PC-9 (cell line): ENCODE measurements at regions of chr3 and their contacts with region 1.

Region 1: DNA sequence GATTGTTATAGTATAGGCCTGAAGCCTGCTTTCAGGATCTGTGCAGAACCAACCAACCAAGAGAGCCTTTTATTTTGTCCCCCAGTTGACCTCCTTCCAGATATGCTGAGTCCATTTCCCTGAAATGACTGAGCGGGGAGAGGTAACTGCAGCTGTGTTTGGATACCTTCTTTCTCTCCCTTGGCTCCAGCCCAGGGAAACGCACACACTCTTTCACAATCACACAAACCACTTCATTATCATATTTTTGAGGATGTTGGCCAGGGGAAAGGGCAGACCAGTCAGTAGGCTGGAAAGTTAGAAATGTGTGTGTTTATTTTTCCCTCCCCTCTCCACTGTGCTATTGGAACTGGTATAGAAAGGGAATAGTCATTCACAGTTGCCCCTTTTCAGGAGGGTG is 417.7 kb upstream of the TBL1XR1 start:
- DNase-seq: peak; percentile 84 to 96
- H3K4me3 ChIP-seq: no peak overlapping the region
- H3K27ac ChIP-seq: peak overlapping the region; percentile 62
- H3K4me1 ChIP-seq: peaks cover 87% of the 10 kb centered on the region
- H3K27me3 ChIP-seq: no peaks in the 10 kb centered on the region
- CTCF ChIP-seq: no peak

Region 2: DNA sequence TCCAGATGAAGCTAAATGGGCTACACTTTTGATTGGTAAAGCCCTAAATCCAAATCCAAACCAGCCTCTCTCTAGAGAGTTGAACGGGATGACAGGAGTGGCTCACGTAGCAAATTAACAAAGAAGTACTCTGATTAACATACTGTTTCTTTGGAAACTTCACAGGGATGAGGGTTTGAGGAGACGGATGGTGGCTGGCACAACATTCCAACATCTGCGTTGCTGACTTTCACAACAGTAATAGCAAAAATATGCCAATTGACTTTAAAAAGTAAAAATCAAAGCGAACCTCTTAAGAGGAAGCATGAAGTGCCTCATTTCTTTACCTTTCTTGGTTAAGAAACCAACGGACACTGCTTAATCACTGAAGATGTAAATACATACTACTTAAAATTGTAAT is 599.1 kb before region 1 on chr3:
- CTCF ChIA-PET with region 1: no interaction called
- POLR2A ChIA-PET with region 1: interaction called, 13 read pairs
- intact Hi-C with region 1: no loop called
- DNase-seq: no peak
- H3K4me3 ChIP-seq: no peak overlapping the region
- H3K27ac ChIP-seq: no peak overlapping the region
- H3K4me1 ChIP-seq: no peaks in the 10 kb centered on the region
- H3K27me3 ChIP-seq: no peaks in the 10 kb centered on the region
- CTCF ChIP-seq: no peak

Region 3: DNA sequence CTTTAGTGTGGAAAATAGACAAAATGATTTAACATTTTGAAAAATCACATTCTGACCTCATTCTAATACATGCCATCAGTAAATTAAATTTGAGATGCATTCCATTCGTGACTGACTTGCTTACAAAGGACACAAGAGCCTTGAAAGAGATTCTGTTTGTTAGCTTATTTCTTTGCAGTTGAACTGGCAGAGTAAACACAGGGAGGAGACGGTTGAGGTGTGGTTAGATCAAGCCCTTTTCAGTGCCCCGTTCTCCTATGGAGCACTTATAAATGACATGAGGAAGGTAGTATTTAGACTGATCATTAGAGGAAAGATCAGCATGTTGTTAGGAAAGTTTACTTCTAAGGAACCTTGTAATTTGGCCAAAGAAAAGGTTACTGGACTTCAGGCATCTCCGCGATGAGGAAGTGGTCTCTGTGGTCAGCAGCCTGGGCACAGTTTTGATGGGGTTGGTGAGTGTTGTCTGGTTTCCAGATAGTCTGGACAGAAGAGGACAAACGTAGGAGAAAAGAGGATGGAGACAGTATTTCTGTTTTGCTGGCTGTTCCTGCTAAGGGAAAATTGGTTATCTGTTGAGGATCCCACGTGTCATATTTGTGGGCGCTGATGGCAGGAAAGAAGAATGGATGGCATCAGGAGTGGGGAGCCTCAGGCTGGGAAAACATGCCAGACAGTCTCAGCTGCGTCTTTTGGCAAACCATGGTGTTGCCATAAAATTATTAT is 88.9 kb before region 1 on chr3:
- CTCF ChIA-PET with region 1: no interaction called
- POLR2A ChIA-PET with region 1: interaction called, 4 read pairs
- intact Hi-C with region 1: loop called (anchors 1 kb)
- DNase-seq: peak; percentile 25 to 87
- H3K4me3 ChIP-seq: no peak overlapping the region
- H3K27ac ChIP-seq: no peak overlapping the region
- H3K4me1 ChIP-seq: peaks cover 79% of the 10 kb centered on the region
- H3K27me3 ChIP-seq: no peaks in the 10 kb centered on the region
- CTCF ChIP-seq: no peak

Region 4: DNA sequence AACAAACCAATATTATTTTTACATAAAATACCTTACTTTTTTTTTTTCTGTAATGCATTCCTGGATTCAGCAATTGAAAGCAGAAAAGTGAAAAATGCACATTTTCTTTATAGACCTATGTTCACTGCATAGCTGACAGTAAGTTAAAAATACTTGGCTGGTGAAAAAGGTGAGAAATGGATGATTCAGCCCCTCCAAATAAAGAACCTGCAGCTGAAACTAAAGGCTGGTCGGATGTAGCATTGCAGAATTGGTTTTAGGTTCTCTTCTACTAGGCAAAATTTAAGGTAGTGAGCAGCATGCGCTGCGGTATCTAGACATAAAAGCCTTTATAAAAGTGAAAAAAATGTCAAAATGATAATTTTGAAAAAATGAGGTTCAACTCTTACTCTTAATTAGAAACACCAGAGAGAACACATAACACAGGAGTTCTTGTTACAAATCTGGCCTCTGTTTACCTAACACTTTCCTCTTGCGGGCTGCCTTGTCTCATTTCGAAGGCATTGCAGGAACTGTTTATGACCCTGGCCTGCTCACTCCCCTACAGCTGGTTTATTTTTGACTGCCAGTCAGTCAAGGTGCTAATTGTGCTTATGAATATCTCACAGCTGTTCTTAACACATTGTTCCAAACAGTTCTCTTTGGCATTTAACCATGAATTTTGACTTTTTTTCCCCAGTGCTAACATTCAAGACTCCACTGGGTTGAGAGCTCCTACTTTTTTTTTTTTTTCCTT is 37.7 kb after region 1 on chr3:
- CTCF ChIA-PET with region 1: no interaction called
- POLR2A ChIA-PET with region 1: interaction called, 14 read pairs
- intact Hi-C with region 1: no loop called
- DNase-seq: no peak
- H3K4me3 ChIP-seq: no peak overlapping the region
- H3K27ac ChIP-seq: no peak overlapping the region
- H3K4me1 ChIP-seq: no peaks in the 10 kb centered on the region
- H3K27me3 ChIP-seq: no peaks in the 10 kb centered on the region
- CTCF ChIP-seq: no peak

Region 5: GRCh38 chr3:177810162-177810623 is 195.2 kb after region 1 on chr3:
- CTCF ChIA-PET with region 1: no interaction called
- POLR2A ChIA-PET with region 1: no interaction called
- intact Hi-C with region 1: loop called (anchors 1 kb)
- DNase-seq: peak in 1 of 2 experiments; percentile 99
- H3K4me3 ChIP-seq: no peak overlapping the region
- H3K27ac ChIP-seq: peak overlapping the region; percentile 82
- H3K4me1 ChIP-seq: peaks cover 34% of the 10 kb centered on the region
- H3K27me3 ChIP-seq: no peaks in the 10 kb centered on the region
- CTCF ChIP-seq: no peak

Region 6: DNA sequence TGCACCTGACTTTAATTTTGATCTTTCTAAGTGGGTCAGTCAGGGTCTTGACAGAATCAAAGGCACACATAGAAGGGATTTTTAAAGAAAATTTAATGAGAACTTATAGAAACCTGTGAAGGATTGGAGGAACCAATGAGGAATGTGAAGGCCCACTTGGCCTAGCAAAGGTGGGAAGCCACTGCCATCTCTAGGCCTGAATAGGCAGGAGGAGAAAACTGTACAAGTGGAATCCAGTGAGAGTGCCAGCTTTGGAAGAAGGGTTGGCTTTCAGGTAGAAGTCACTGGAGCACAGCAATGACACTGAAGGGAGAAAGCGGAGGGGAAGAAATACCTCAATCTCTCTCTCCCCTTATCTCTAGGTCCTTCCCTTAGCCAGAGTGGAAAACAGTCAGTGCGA is 540.5 kb after region 1 on chr3:
- CTCF ChIA-PET with region 1: no interaction called
- POLR2A ChIA-PET with region 1: no interaction called
- intact Hi-C with region 1: loop called (anchors 10 kb)
- DNase-seq: no peak
- H3K4me3 ChIP-seq: no peak overlapping the region
- H3K27ac ChIP-seq: no peak overlapping the region
- H3K4me1 ChIP-seq: no peaks in the 10 kb centered on the region
- H3K27me3 ChIP-seq: no peaks in the 10 kb centered on the region
- CTCF ChIP-seq: peak; percentile 16; the same call in 1 of the 2 replicates